ENCODE measurements at regions of chr3 and their contacts with region 1.

Region 1: GRCh38 chr3:45656575-45657363 is 32.4 kb upstream of the SACM1L start:
- DNase-seq: peak; percentile 96
- ATAC-seq: peak; percentile 93
- H3K4me3 ChIP-seq: no peak overlapping the region
- H3K27ac ChIP-seq: no peak overlapping the region
- H3K4me1 ChIP-seq: peaks cover 4 to 16% of the 10 kb centered on the region in 2 donors
- H3K27me3 ChIP-seq: no peaks in the 10 kb centered on the region

Region 2: GRCh38 chr3:45037734-45038455 is 618.9 kb before region 1 on chr3:
- intact Hi-C with region 1: loop called in 1 of 2 experiments (anchors 10 kb)
- DNase-seq: peak; percentile 94 to 95
- ATAC-seq: peak; percentile 89
- H3K4me3 ChIP-seq: no peak overlapping the region
- H3K27ac ChIP-seq: no peak overlapping the region
- H3K4me1 ChIP-seq: no peaks in the 10 kb centered on the region
- H3K27me3 ChIP-seq: no peaks in the 10 kb centered on the region

Region 3: GRCh38 chr3:45224824-45225464 is 431.8 kb before region 1 on chr3:
- intact Hi-C with region 1: loop called in 1 of 2 experiments (anchors 10 kb)
- DNase-seq: peak; percentile 86 to 88
- ATAC-seq: peak; percentile 69
- H3K4me3 ChIP-seq: peak overlapping the region; percentile 59 to 96
- H3K27ac ChIP-seq: no peak overlapping the region
- H3K4me1 ChIP-seq: no peaks in the 10 kb centered on the region
- H3K27me3 ChIP-seq: no peaks in the 10 kb centered on the region

Region 4: GRCh38 chr3:45509768-45510129 is 147.0 kb before region 1 on chr3:
- intact Hi-C with region 1: loop called (anchors 2 kb)
- DNase-seq: no peak
- ATAC-seq: no peak
- H3K4me3 ChIP-seq: no peak overlapping the region
- H3K27ac ChIP-seq: no peak overlapping the region
- H3K4me1 ChIP-seq: no peaks in the 10 kb centered on the region
- H3K27me3 ChIP-seq: no peaks in the 10 kb centered on the region

Region 5: GRCh38 chr3:45593708-45594609 is 62.8 kb before region 1 on chr3:
- intact Hi-C with region 1: loop called (anchors 1 to 2 kb)
- DNase-seq: peak; percentile 85 to 90
- ATAC-seq: peak; percentile 83
- H3K4me3 ChIP-seq: peak overlapping the region; percentile 52 to 62
- H3K27ac ChIP-seq: peak overlapping the region; percentile 37 to 70
- H3K4me1 ChIP-seq: no peaks in the 10 kb centered on the region
- H3K27me3 ChIP-seq: no peaks in the 10 kb centered on the region